IMR-90 (cell line): ENCODE measurements at regions of chr11 and their contacts with region 1.

Region 1: GRCh38 chr11:77127232-77127911 is 674 bp upstream of the MYO7A start:
- DNase-seq: peak; percentile 39
- ATAC-seq: peak; percentile 77
- H3K4me3 ChIP-seq: peak overlapping the region; percentile 33
- H3K27ac ChIP-seq: no peak overlapping the region
- H3K4me1 ChIP-seq: peaks cover 10% of the 10 kb centered on the region; the same call in 1 of the 2 replicates
- H3K27me3 ChIP-seq: no peaks in the 10 kb centered on the region
- CTCF ChIP-seq: peak; percentile 87
- POLR2A ChIP-seq: no peak
- RAD21 ChIP-seq: peak; percentile 71

Region 2: DNA sequence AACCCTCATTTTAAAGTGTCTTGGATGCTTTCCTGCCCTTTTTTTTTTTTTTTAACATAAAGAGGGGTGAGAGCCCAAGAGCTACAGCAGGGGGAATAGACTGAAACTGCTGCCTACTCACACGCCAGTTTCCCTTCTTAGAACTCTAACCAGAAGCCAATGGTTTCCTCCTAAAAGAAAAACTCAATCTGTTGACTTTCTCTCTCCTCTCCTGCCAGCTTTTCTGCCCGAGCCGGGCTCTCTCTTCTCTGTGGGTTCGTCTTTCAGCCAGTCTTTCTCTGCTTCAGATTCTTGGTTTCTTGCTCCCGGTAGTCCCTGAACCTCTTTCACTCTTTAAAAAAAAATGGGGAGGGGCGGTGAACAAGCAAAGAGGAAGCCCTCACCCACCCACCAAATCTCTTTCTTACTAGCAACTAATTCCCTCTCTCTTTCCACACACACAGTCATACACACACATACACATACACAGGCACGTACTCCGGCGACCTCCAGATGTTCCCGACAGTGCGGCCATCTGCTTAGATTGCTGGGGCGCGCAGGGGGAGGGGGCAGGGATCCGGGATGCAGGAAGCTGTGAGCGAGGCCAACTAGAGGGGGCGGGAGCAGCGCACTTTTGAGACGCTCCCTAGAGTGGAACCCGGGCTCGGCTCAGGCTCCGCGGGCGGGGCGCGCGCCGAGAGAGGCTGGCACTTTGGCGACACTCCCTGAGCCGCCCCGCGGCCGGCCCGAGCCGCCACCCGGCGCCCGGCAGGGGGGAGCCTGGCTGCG is 344.7 kb before region 1 on chr11:
- CTCF ChIA-PET with region 1: no interaction called
- POLR2A ChIA-PET with region 1: no interaction called
- dilution Hi-C with region 1: no loop called
- in situ Hi-C with region 1: no loop called
- intact Hi-C with region 1: no loop called
- DNase-seq: peak; percentile 98
- ATAC-seq: peak; percentile 87
- H3K4me3 ChIP-seq: peak overlapping the region; percentile 92
- H3K27ac ChIP-seq: peak overlapping the region; percentile 90
- H3K4me1 ChIP-seq: peaks cover 24% of the 10 kb centered on the region
- H3K27me3 ChIP-seq: peaks cover 10% of the 10 kb centered on the region; the same call in 1 of the 2 replicates
- CTCF ChIP-seq: no peak
- POLR2A ChIP-seq: no peak; the same call in 1 of the 2 replicates
- RAD21 ChIP-seq: peak; percentile 29; the same call in 1 of the 2 replicates

Region 3: DNA sequence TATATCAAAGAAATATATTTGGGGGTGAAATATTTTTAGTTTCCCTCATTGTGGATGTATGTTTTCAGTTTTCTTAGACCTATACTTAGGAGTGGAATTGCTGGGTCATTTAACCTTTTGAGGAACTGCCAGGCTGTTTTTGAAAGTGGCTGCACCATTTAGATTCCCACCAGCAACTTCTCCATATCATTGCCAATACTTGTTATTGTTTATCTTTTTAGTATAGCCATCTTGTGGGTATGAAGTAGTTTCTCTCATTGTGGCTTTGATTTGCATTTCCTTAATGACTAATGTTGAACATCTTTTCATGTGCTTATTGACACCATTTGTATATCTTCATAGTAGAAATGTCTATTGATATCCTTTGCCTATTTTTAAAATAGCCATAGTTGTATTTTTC is 155.3 kb before region 1 on chr11:
- CTCF ChIA-PET with region 1: no interaction called
- POLR2A ChIA-PET with region 1: no interaction called
- dilution Hi-C with region 1: no loop called
- in situ Hi-C with region 1: no loop called
- intact Hi-C with region 1: no loop called
- DNase-seq: no peak
- ATAC-seq: no peak
- H3K4me3 ChIP-seq: no peak overlapping the region
- H3K27ac ChIP-seq: no peak overlapping the region
- H3K4me1 ChIP-seq: no peaks in the 10 kb centered on the region
- H3K27me3 ChIP-seq: no peaks in the 10 kb centered on the region
- CTCF ChIP-seq: no peak
- POLR2A ChIP-seq: no peak
- RAD21 ChIP-seq: no peak

Region 4: GRCh38 chr11:77187776-77188632 is 60.6 kb after region 1 on chr11:
- CTCF ChIA-PET with region 1: interaction called, 21 read pairs
- POLR2A ChIA-PET with region 1: no interaction called
- dilution Hi-C with region 1: no loop called
- in situ Hi-C with region 1: loop called (anchors 10 kb)
- intact Hi-C with region 1: loop called (anchors 1 kb)
- DNase-seq: peak; percentile 75
- ATAC-seq: peak; percentile 95
- H3K4me3 ChIP-seq: no peak overlapping the region
- H3K27ac ChIP-seq: no peak overlapping the region
- H3K4me1 ChIP-seq: no peaks in the 10 kb centered on the region
- H3K27me3 ChIP-seq: peaks cover 24% of the 10 kb centered on the region
- CTCF ChIP-seq: peak; percentile 94
- POLR2A ChIP-seq: no peak
- RAD21 ChIP-seq: peak; percentile 94

Region 5: GRCh38 chr11:77547863-77548551 is 420.6 kb after region 1 on chr11:
- CTCF ChIA-PET with region 1: interaction called, 17 read pairs
- POLR2A ChIA-PET with region 1: no interaction called
- dilution Hi-C with region 1: no loop called
- in situ Hi-C with region 1: loop called (anchors 5 kb)
- intact Hi-C with region 1: loop called (anchors 1 kb)
- DNase-seq: peak; percentile 79
- ATAC-seq: peak; percentile 83
- H3K4me3 ChIP-seq: no peak overlapping the region
- H3K27ac ChIP-seq: no peak overlapping the region
- H3K4me1 ChIP-seq: no peaks in the 10 kb centered on the region; the same call in 1 of the 2 replicates
- H3K27me3 ChIP-seq: no peaks in the 10 kb centered on the region
- CTCF ChIP-seq: peak; percentile 84
- POLR2A ChIP-seq: no peak
- RAD21 ChIP-seq: peak; percentile 85